CD4-positive, alpha-beta T cell (primary cell): ENCODE measurements at regions of chr14 and their contacts with region 1.

Region 1: GRCh38 chr14:104752735-104753531 is at the start of gene SIVA1:
- DNase-seq: peak; percentile 99 to 100 (median 99)
- ATAC-seq: peak; percentile 88
- H3K4me3 ChIP-seq: peak within 1 kb of the TSS; percentile 93
- H3K4me3 Mint-ChIP-seq: peak within 1 kb of the TSS; percentile 96
- H3K27ac ChIP-seq: peak within 1 kb of the TSS; percentile 60 to 83
- H3K27ac Mint-ChIP-seq: peak within 1 kb of the TSS; percentile 97
- H3K4me1 ChIP-seq: peaks cover 41% of the 10 kb centered on the region
- H3K4me1 Mint-ChIP-seq: peaks cover 37% of the 10 kb centered on the region
- H3K27me3 ChIP-seq: no peaks in the 10 kb centered on the region
- H3K27me3 Mint-ChIP-seq: no peaks in the 10 kb centered on the region
- CTCF ChIP-seq: no peak
- total RNA-seq, gene SIVA1: 111 to 124 TPM

Region 2: GRCh38 chr14:103920981-103921854 is 831.7 kb before region 1 on chr14:
- CTCF ChIA-PET with region 1: no interaction called
- POLR2A ChIA-PET with region 1: no interaction called
- intact Hi-C with region 1: loop called in 1 of 2 experiments (anchors 5 kb)
- DNase-seq: peak; percentile 88 to 97 (median 95)
- ATAC-seq: peak; percentile 98
- H3K4me3 ChIP-seq: peak overlapping the region; percentile 100
- H3K4me3 Mint-ChIP-seq: peak overlapping the region; percentile 86
- H3K27ac ChIP-seq: peak overlapping the region; percentile 65 to 68
- H3K27ac Mint-ChIP-seq: peak overlapping the region; percentile 51
- H3K4me1 ChIP-seq: peaks cover 39% of the 10 kb centered on the region
- H3K4me1 Mint-ChIP-seq: peaks cover 18% of the 10 kb centered on the region
- H3K27me3 ChIP-seq: peaks cover 0 to 2% of the 10 kb centered on the region in 2 experiments
- H3K27me3 Mint-ChIP-seq: peaks cover 5% of the 10 kb centered on the region
- CTCF ChIP-seq: peak; percentile 98

Region 3: GRCh38 chr14:104689109-104689880 is 63.6 kb before region 1 on chr14 and contains the start of gene INF2:
- CTCF ChIA-PET with region 1: no interaction called
- POLR2A ChIA-PET with region 1: interaction called, 10 read pairs
- intact Hi-C with region 1: loop called in 1 of 2 experiments (anchors 2 kb)
- DNase-seq: peak; percentile 14 to 81 (median 42)
- ATAC-seq: peak; percentile 62
- H3K4me3 ChIP-seq: peak within 1 kb of the TSS; percentile 61
- H3K4me3 Mint-ChIP-seq: peak within 1 kb of the TSS; percentile 89
- H3K27ac ChIP-seq: peak within 1 kb of the TSS in 1 of 2 donors; percentile 29
- H3K27ac Mint-ChIP-seq: no peak within 1 kb of the TSS
- H3K4me1 ChIP-seq: peaks cover 80% of the 10 kb centered on the region
- H3K4me1 Mint-ChIP-seq: peaks cover 51% of the 10 kb centered on the region
- H3K27me3 ChIP-seq: no peaks in the 10 kb centered on the region
- H3K27me3 Mint-ChIP-seq: no peaks in the 10 kb centered on the region
- CTCF ChIP-seq: no peak
- total RNA-seq, gene INF2: 74.9 to 76.9 TPM

Region 4: GRCh38 chr14:104768437-104769323 is 15.7 kb after region 1 on chr14:
- CTCF ChIA-PET with region 1: interaction called, 15 read pairs
- POLR2A ChIA-PET with region 1: interaction called, 12 read pairs
- intact Hi-C with region 1: loop called in 1 of 2 experiments (anchors 2 kb)
- DNase-seq: peak; percentile 81 to 97 (median 91)
- ATAC-seq: peak; percentile 98
- H3K4me3 ChIP-seq: no peak overlapping the region
- H3K4me3 Mint-ChIP-seq: no peak overlapping the region
- H3K27ac ChIP-seq: no peak overlapping the region
- H3K27ac Mint-ChIP-seq: no peak overlapping the region
- H3K4me1 ChIP-seq: peaks cover 9% of the 10 kb centered on the region
- H3K4me1 Mint-ChIP-seq: no peaks in the 10 kb centered on the region
- H3K27me3 ChIP-seq: no peaks in the 10 kb centered on the region
- H3K27me3 Mint-ChIP-seq: no peaks in the 10 kb centered on the region
- CTCF ChIP-seq: peak; percentile 94

Region 5: DNA sequence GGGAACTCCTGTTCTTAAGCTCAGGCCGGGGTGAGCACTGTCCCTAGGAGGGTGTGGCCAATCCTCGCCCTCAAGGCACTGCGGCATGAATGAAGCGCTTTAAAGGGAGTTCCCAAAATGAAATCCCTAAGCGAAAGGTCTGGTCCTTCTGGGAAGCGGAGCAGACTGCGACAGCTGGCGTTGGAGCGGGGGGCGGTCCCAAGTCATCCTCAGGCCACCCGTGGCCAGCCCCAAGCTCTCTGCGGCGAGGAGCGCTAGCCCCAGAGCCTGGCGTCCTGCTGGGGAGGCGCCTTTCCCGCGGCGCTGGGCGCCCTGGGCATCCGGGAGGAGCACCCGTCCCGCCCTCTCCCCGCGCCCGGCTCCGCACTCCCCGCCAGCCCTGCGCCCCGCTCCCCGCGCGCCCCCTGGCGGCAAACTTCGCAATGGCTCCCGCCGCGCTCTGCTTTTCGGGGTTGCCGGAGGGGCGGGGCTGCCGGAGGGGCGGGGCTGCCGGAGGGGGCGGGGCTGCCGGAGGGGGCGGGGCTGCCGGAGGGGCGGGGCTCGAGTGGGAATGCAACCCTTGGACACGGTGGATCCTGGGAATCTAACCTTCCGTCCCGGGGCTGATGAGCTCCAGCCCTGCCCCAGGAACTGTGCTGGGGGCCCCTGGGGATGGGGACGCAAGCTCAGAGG is 73.4 kb after region 1 on chr14:
- CTCF ChIA-PET with region 1: interaction called, 10 read pairs
- POLR2A ChIA-PET with region 1: interaction called, 24 read pairs
- intact Hi-C with region 1: loop called (anchors 1 to 5 kb)
- DNase-seq: peak; percentile 87 to 99 (median 94)
- ATAC-seq: peak; percentile 91
- H3K4me3 ChIP-seq: peak overlapping the region; percentile 74
- H3K4me3 Mint-ChIP-seq: peak overlapping the region; percentile 91
- H3K27ac ChIP-seq: no peak overlapping the region
- H3K27ac Mint-ChIP-seq: no peak overlapping the region
- H3K4me1 ChIP-seq: peaks cover 23% of the 10 kb centered on the region
- H3K4me1 Mint-ChIP-seq: peaks cover 29% of the 10 kb centered on the region
- H3K27me3 ChIP-seq: no peaks in the 10 kb centered on the region
- H3K27me3 Mint-ChIP-seq: peaks cover 10% of the 10 kb centered on the region
- CTCF ChIP-seq: peak; percentile 74

Region 6: GRCh38 chr14:104841730-104842129 is 88.8 kb after region 1 on chr14:
- CTCF ChIA-PET with region 1: no interaction called
- POLR2A ChIA-PET with region 1: no interaction called
- intact Hi-C with region 1: no loop called
- DNase-seq: no peak
- ATAC-seq: no peak
- H3K4me3 ChIP-seq: no peak overlapping the region
- H3K4me3 Mint-ChIP-seq: no peak overlapping the region
- H3K27ac ChIP-seq: no peak overlapping the region
- H3K27ac Mint-ChIP-seq: no peak overlapping the region
- H3K4me1 ChIP-seq: peaks cover 10% of the 10 kb centered on the region
- H3K4me1 Mint-ChIP-seq: no peaks in the 10 kb centered on the region
- H3K27me3 ChIP-seq: peaks cover 41 to 48% of the 10 kb centered on the region in 2 experiments
- H3K27me3 Mint-ChIP-seq: peaks cover 59% of the 10 kb centered on the region
- CTCF ChIP-seq: no peak